ENCODE measurements at regions of chr17 and their contacts with region 1.

Region 1: GRCh38 chr17:57486873-57487301 is 230.6 kb downstream of the MSI2 start:
- DNase-seq: no peak
- CTCF ChIP-seq: no peak

Region 2: GRCh38 chr17:57385975-57386374 is 100.9 kb before region 1 on chr17:
- CTCF ChIA-PET with region 1: no interaction called
- POLR2A ChIA-PET with region 1: no interaction called
- DNase-seq: no peak
- CTCF ChIP-seq: no peak

Region 3: GRCh38 chr17:57468932-57469775 is 17.7 kb before region 1 on chr17:
- CTCF ChIA-PET with region 1: interaction called, 12 read pairs
- POLR2A ChIA-PET with region 1: interaction called, 4 read pairs
- DNase-seq: peak; percentile 65
- CTCF ChIP-seq: no peak

Region 4: DNA sequence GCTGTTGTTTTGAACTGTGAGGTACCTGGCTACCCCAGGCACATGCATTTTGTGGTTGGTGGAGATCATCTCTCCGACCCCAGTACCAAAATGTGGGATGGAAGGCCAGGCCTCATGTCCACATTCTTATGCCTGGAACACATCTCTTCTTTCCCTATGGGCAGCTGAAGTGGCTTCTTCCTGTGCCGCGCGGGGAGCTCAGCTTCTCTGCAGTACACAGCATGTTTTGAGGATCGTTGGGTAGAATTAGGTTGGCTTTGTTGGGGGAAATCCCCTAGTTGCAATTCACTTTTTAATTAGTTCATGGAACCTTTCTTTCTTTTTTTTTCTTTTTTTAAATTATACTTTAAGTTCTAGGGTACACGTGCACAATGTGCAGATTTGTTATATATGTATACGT is 11.6 kb after region 1 on chr17:
- CTCF ChIA-PET with region 1: interaction called, 12 read pairs
- POLR2A ChIA-PET with region 1: no interaction called
- DNase-seq: no peak
- CTCF ChIP-seq: no peak